ENCODE measurements at regions of chr5 and their contacts with region 1.

Region 1: GRCh38 chr5:96807075-96807654 is 580 bp downstream of the ERAP1 start:
- DNase-seq: peak; percentile 86
- ATAC-seq: peak; percentile 66
- H3K4me3 ChIP-seq: peak overlapping the region; percentile 90
- H3K27ac ChIP-seq: peak overlapping the region; percentile 88
- H3K4me1 ChIP-seq: peaks cover 10% of the 10 kb centered on the region
- H3K27me3 ChIP-seq: no peaks in the 10 kb centered on the region
- CTCF ChIP-seq: no peak

Region 2: GRCh38 chr5:96293966-96294883 is 512.9 kb before region 1 on chr5:
- CTCF ChIA-PET with region 1: no interaction called
- POLR2A ChIA-PET with region 1: interaction called, 24 read pairs
- intact Hi-C with region 1: no loop called
- DNase-seq: peak; percentile 61
- ATAC-seq: peak; percentile 89
- H3K4me3 ChIP-seq: no peak overlapping the region
- H3K27ac ChIP-seq: peak overlapping the region; percentile 68
- H3K4me1 ChIP-seq: peaks cover 10% of the 10 kb centered on the region
- H3K27me3 ChIP-seq: no peaks in the 10 kb centered on the region
- CTCF ChIP-seq: no peak

Region 3: DNA sequence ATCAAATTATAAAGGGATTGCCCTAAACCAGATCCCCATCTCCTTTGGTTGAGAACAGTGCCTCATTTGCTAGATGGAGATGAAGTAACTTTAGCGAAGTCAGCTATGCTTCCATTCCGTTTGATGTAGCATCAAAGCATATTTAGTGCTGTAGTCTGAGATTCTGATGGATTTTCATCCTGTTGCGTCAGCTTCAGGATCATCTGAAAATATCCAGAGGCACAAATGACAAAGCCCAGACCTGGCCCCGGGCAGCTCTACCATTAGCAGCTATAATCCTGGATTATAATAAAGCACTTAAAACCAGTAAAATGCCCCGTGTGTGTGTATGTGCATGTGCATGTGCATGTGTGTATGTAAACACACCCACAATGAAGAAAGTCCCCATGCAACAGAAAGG is 44.1 kb before region 1 on chr5:
- CTCF ChIA-PET with region 1: no interaction called
- POLR2A ChIA-PET with region 1: no interaction called
- intact Hi-C with region 1: loop called (anchors 2 kb)
- DNase-seq: no peak
- ATAC-seq: no peak
- H3K4me3 ChIP-seq: no peak overlapping the region
- H3K27ac ChIP-seq: no peak overlapping the region
- H3K4me1 ChIP-seq: peaks cover 25% of the 10 kb centered on the region
- H3K27me3 ChIP-seq: no peaks in the 10 kb centered on the region
- CTCF ChIP-seq: no peak

Region 4: DNA sequence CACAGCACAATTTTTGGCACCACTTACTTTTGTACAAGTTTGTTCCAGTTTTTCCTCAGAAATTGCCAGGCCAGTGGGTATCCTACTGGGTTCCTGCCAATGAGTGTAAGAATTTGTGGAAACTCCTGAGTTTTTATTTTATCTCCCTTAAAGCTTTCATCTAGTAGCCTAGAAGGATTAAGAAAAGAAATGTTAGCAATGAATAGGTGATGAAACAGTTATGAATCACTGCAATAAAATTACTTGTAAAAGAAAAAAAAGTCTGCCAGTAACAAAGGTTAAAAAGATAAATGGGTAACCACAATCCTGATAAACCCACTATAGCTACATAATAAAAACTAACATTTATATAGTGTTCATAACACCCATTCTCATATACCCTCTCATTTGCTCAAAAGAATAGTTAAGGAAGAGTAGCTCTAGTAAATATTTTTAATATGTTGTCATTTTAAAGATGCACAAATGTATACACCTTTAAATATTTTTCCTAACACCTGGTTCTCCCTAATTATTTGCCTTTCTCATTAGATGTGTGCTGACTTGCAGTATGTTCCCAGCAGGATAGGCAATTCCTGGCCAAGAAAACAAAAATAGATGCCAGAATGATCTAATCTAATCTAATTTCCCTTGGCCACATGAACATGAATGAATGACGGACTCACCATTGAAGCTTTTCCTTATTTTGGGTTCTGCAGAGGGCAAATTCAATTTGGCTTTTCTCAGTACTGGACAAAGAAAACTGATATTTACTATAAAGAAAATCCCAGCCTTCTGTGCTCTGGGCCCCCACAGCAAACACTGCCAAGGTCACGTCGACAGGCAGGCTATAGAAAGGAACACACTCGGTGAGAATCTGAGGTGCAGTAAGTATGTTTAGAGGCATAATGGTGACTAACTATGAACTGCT is 25.9 kb before region 1 on chr5:
- CTCF ChIA-PET with region 1: no interaction called
- POLR2A ChIA-PET with region 1: no interaction called
- intact Hi-C with region 1: loop called (anchors 2 kb)
- DNase-seq: peak; percentile 88
- ATAC-seq: peak; percentile 85
- H3K4me3 ChIP-seq: no peak overlapping the region; the same call in 1 of the 2 replicates
- H3K27ac ChIP-seq: peak overlapping the region; percentile 58
- H3K4me1 ChIP-seq: peaks cover 22% of the 10 kb centered on the region
- H3K27me3 ChIP-seq: no peaks in the 10 kb centered on the region
- CTCF ChIP-seq: no peak

Region 5: GRCh38 chr5:96823900-96824351 is 16.8 kb after region 1 on chr5:
- CTCF ChIA-PET with region 1: no interaction called
- POLR2A ChIA-PET with region 1: no interaction called
- intact Hi-C with region 1: loop called (anchors 1 kb)
- DNase-seq: peak; percentile 96
- ATAC-seq: peak; percentile 100
- H3K4me3 ChIP-seq: no peak overlapping the region
- H3K27ac ChIP-seq: peak overlapping the region; percentile 71
- H3K4me1 ChIP-seq: peaks cover 29% of the 10 kb centered on the region
- H3K27me3 ChIP-seq: no peaks in the 10 kb centered on the region
- CTCF ChIP-seq: no peak

Region 6: DNA sequence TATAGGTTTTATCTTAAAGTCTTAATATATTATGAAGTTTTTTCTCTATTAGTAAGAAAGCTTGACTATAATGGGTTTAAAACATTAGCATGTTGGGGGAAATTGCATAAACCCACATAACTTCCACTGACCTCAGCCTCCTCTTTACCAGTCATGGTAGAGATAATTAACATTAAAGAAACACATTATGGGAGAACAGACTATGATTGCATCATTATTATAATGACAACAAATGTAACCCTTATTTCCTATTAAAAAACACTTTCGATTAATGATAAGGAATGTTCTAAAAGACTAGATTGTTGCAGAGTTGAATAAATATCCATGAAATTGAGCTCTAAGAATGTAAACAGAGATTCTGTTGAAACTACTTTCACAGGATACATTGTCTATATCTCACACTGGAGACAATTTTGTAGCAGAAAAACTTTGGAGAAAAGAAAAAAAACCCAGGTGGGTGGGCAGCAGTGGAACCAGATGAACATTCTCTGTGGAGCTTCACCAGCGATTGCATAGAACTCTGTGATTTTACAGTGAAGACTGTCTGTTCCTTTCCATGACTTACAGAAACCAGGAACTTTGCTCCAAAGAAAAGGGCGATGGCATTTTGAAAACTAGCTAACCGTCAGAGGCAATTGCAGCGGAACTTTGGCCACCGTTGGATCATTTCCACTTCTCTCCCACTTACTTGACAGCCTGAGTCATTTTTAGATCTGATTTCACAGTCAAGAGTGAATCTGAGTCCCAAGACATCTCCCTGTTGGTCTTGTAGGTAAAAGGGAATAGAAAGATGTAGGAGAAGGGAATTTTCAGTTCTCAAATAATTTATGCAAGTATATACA is 48.1 kb after region 1 on chr5:
- CTCF ChIA-PET with region 1: no interaction called
- POLR2A ChIA-PET with region 1: interaction called, 5 read pairs
- intact Hi-C with region 1: loop called (anchors 1 kb)
- DNase-seq: peak; percentile 94
- ATAC-seq: peak; percentile 70
- H3K4me3 ChIP-seq: peak overlapping the region; percentile 58
- H3K27ac ChIP-seq: peak overlapping the region; percentile 92
- H3K4me1 ChIP-seq: peaks cover 62% of the 10 kb centered on the region
- H3K27me3 ChIP-seq: no peaks in the 10 kb centered on the region
- CTCF ChIP-seq: no peak

Region 7: DNA sequence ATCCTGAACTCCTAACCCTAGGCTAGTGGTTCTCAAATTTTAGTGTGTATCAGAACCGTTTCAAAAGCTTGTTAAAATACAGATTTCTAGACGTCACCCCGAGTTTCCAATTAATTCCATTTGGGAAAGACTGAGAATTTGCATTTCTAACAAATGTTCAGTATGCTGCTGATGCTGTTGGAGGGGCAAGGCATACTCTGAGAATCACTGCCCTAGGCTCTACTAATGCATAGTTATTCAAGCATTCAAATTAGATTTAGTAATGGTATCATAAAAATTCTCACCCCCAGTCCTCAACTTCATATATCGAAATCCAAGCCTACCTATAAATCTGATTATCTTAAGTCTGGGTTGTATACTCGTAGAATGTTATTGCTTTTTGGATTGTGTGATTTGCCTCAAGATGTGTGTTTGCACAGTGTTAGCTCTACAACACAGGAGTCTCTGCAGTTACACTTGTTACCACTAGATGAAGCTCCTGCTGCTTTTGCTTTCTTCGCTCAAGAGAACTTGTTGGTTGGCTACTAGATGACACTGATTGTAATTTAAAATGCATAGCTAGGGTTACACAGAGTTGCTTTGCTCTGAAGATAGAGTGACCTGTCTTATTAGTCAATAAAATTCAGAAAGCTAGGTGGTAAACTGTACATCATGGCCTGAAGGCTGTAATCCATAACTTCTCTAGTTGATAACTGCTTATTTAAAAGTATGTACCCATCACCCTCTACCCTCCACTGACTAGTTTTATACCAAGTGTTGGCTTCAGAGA is 61.6 kb after region 1 on chr5:
- CTCF ChIA-PET with region 1: no interaction called
- POLR2A ChIA-PET with region 1: interaction called, 4 read pairs
- intact Hi-C with region 1: loop called (anchors 2 kb)
- DNase-seq: peak; percentile 76
- ATAC-seq: peak; percentile 97
- H3K4me3 ChIP-seq: no peak overlapping the region
- H3K27ac ChIP-seq: no peak overlapping the region
- H3K4me1 ChIP-seq: peaks cover 7% of the 10 kb centered on the region; the same call in 1 of the 2 replicates
- H3K27me3 ChIP-seq: no peaks in the 10 kb centered on the region
- CTCF ChIP-seq: peak; percentile 94